Activated naive CD4-positive, alpha-beta T cell treated with anti-CD3 and anti-CD28 coated beads for 36 hours (primary cell): ENCODE measurements at regions of chr6 and their contacts with region 1.

Region 1: GRCh38 chr6:39302669-39303424 is 11.4 kb downstream of the KCNK17 start:
- DNase-seq: peak; percentile 95
- H3K4me3 Mint-ChIP-seq: peak overlapping the region; percentile 16
- H3K27ac Mint-ChIP-seq: no peak overlapping the region
- H3K4me1 Mint-ChIP-seq: peaks cover 6% of the 10 kb centered on the region
- H3K27me3 Mint-ChIP-seq: no peaks in the 10 kb centered on the region

Region 2: DNA sequence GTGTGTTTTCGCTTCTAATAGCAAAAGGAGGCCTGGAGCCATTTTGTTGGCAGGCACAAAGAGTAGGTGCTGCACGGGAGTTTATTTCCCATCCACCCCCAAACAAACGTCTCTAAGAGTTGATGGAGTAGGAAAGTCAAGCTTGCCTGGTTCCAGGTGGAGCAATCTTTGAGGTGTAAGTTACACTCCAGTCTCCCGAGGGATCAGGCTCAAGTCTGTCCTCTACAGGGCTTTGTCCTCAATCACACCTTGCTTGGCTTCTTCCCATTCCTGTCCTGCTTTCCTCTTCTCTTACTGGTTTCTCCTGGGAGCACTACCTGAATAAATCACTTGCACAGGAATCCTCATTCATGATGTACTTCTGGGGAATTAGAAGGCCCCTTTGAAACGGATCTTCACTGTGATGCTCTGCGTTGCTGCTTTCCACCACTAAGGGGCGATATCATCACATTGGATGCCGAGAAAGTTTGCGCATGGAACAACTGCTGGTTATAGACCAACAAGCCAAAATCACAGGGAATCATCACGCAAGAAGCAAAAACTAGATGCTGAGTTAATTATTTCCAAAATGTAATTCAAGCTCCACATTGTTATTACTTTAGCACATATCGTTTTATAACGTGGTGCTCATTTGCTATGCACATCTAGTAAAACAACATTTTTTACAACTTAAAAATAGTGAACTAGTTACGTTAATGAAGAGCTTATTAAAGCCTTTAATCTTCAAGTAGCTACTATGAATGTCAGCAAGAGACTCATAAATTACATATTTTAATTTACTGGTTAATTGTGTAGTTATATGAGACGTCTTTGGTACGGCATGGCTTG is 430.9 kb before region 1 on chr6:
- CTCF ChIA-PET with region 1: interaction called, 14 read pairs
- intact Hi-C with region 1: loop called (anchors 2 kb)
- DNase-seq: peak; percentile 82
- H3K4me3 Mint-ChIP-seq: no peak overlapping the region
- H3K27ac Mint-ChIP-seq: no peak overlapping the region
- H3K4me1 Mint-ChIP-seq: peaks cover 32% of the 10 kb centered on the region
- H3K27me3 Mint-ChIP-seq: no peaks in the 10 kb centered on the region

Region 3: GRCh38 chr6:38997128-38997761 is 305.6 kb before region 1 on chr6:
- CTCF ChIA-PET with region 1: interaction called, 42 read pairs
- intact Hi-C with region 1: loop called (anchors 1 kb)
- DNase-seq: peak; percentile 56
- H3K4me3 Mint-ChIP-seq: no peak overlapping the region
- H3K27ac Mint-ChIP-seq: no peak overlapping the region
- H3K4me1 Mint-ChIP-seq: no peaks in the 10 kb centered on the region
- H3K27me3 Mint-ChIP-seq: peaks cover 19% of the 10 kb centered on the region

Region 4: GRCh38 chr6:39153766-39154397 is 149.0 kb before region 1 on chr6:
- CTCF ChIA-PET with region 1: interaction called, 29 read pairs
- intact Hi-C with region 1: no loop called
- DNase-seq: peak; percentile 59
- H3K4me3 Mint-ChIP-seq: no peak overlapping the region
- H3K27ac Mint-ChIP-seq: peak overlapping the region; percentile 44
- H3K4me1 Mint-ChIP-seq: peaks cover 29% of the 10 kb centered on the region
- H3K27me3 Mint-ChIP-seq: peaks cover 3% of the 10 kb centered on the region

Region 5: DNA sequence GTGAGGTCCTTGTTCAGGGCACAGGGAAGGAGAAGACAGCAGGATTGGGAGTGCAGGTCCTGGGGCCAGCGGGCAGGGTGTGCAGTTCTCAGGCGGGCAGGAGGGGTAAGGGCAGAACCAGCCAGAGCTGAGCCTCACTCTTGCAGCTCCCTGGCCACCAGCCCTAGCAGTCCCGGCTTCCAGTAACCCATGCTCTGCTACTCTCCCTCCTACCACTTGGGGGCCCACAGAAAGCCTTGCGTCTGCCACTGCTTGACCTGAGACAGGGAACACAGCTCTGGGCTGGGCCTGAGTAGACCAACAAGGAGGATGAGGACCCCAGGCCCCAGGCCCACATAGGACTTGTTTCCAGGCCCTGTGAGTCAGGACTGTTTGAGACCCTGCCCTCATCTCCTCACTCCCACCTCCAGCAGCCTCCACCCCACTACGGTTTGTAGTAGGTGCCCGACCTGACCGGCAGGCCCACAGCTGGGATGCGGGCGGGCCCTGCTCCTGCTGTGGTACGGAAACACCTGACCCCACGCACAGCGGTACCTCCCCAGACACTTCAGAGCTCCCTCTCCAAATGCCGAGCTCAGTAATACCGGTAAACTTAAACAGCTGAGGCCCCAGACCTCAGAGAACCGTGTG is 112.8 kb before region 1 on chr6:
- CTCF ChIA-PET with region 1: interaction called, 11 read pairs
- intact Hi-C with region 1: loop called (anchors 1 kb)
- DNase-seq: peak; percentile 12
- H3K4me3 Mint-ChIP-seq: no peak overlapping the region
- H3K27ac Mint-ChIP-seq: peak overlapping the region; percentile 16
- H3K4me1 Mint-ChIP-seq: peaks cover 9% of the 10 kb centered on the region
- H3K27me3 Mint-ChIP-seq: no peaks in the 10 kb centered on the region